ENCODE measurements at regions of chr19 and their contacts with region 1.

Region 1: DNA sequence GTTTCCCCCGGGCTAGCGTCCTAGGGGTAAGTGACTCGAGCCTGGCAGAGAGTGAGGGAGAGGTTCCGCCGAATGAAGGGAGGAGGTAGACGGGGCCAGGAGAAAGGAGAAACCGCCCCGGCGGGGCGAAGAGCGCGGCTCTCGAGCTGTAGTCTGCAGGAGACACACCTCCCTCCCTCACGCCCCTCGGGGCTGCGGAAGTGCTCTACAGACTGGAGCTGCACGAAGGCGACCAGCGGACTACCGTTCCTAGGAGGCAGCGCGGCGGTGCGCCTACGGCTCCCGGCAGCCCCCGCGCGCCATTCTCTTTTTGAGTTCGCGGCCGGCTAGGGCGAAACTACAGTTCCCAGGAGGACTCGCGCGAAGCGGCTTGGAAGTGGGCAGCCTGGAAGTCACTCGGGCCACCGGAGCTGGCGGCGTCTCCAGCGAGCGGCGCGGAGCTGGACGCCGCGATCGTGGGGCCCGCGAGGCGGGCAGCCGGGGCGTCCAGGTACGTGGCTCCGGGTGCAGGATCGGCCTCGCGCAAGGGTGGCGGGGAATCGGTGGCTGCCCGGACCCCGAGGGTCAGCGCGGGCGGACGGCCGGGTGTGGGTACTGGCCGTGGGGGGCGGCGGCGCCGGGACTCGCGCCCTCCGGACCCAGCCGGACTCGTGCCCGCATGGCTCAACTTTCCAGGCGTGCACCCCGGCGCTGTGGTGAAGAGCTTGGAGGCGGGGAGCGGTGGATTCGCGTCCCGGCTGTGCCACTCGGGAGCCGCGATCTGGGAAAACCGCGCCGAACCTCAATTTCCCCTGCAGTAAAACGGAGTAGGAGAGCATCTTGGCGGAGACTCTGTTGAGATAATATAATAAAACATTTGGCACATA is at the start of gene SIPA1L3:
- DNase-seq: peak; percentile 92
- CTCF ChIP-seq: no peak

Region 2: GRCh38 chr19:37691881-37692504 is 215.1 kb before region 1 on chr19:
- CTCF ChIA-PET with region 1: no interaction called
- POLR2A ChIA-PET with region 1: no interaction called
- DNase-seq: peak; percentile 62
- CTCF ChIP-seq: no peak

Region 3: GRCh38 chr19:37763488-37763887 is 143.6 kb before region 1 on chr19:
- CTCF ChIA-PET with region 1: no interaction called
- POLR2A ChIA-PET with region 1: no interaction called
- DNase-seq: no peak
- CTCF ChIP-seq: no peak

Region 4: GRCh38 chr19:37931881-37932655 is 25.0 kb after region 1 on chr19:
- CTCF ChIA-PET with region 1: interaction called, 14 read pairs
- POLR2A ChIA-PET with region 1: interaction called, 3 read pairs
- DNase-seq: peak; percentile 62
- CTCF ChIP-seq: no peak

Region 5: GRCh38 chr19:38049105-38049649 is 142.1 kb after region 1 on chr19:
- CTCF ChIA-PET with region 1: interaction called, 10 read pairs
- POLR2A ChIA-PET with region 1: no interaction called
- DNase-seq: peak; percentile 76
- CTCF ChIP-seq: no peak

Region 6: GRCh38 chr19:38095411-38096308 is 188.6 kb after region 1 on chr19:
- CTCF ChIA-PET with region 1: interaction called, 13 read pairs
- POLR2A ChIA-PET with region 1: no interaction called
- DNase-seq: peak; percentile 73
- CTCF ChIP-seq: peak; percentile 61

Region 7: GRCh38 chr19:38229585-38230073 is 322.5 kb after region 1 on chr19:
- CTCF ChIA-PET with region 1: interaction called, 18 read pairs
- POLR2A ChIA-PET with region 1: no interaction called
- DNase-seq: peak; percentile 89
- CTCF ChIP-seq: no peak

Region 8: DNA sequence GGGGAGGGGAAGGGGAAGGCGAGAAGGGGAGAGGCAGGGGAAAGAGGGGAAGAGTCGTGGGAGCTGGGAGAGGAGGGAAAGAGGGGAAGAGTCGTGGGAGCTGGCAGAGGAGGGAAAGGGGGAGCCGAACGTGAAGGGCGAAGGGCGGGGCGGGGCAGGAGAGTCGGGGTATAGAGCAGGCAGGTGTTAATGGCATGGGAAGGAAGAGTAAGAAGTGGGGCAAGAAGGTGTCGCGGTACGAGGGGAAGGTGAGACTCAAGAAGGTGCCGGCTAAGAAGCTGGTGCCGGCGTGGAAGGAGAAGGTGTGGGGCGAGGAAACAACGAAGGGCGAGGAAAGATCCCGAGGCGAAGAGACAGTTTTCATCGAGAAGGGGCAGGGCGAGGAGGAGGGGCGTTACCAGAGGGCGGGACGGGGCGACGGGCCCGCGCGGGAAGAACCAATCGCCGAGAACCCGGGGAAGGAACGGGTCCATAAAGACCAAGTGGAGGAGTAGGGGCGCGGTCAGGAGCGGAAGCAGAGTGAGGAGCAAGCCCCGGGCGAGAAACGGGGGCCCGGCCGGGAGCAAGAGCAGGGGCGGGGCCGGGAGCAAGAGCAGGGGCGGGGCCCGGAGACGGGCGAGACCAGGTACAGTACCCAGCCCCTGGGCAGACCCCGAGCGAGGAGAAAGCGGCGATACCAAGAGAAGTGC is 429.0 kb after region 1 on chr19:
- CTCF ChIA-PET with region 1: interaction called, 17 read pairs
- POLR2A ChIA-PET with region 1: interaction called, 7 read pairs
- DNase-seq: peak; percentile 94
- CTCF ChIP-seq: no peak

Measured in GM10248 (cell line).